ENCODE measurements at regions of chr4 and their contacts with region 1.

Region 1: DNA sequence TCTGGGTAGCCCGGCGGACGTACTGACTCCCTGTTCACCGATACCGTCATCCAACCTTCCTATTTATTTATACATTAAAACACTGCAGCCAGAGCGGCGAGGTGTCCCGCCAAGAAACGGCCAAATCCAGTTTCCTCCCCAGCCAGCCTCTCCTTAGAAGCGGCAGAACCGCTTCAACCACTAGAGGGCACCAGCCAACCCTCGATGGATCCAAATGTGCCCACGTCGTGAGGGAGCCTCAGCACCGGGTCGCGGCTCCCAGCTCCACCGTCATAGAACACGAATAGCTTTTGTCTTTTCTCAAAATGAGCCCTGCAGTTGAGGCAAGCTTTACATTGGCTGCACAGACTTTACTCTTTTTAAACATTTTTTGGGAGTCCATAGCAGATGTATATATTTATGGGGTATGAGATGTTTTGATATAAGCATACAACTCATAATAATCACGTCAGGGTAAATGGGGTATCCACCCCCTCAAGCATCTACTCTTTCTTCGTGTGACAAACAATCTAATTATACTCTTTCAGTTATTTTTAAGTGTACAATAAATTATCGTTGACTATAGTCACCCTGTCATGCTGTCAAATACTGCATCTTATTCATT is 13.0 kb upstream of the HELT start:
- DNase-seq: peak; percentile 59 to 96 (median 83)

Region 2: DNA sequence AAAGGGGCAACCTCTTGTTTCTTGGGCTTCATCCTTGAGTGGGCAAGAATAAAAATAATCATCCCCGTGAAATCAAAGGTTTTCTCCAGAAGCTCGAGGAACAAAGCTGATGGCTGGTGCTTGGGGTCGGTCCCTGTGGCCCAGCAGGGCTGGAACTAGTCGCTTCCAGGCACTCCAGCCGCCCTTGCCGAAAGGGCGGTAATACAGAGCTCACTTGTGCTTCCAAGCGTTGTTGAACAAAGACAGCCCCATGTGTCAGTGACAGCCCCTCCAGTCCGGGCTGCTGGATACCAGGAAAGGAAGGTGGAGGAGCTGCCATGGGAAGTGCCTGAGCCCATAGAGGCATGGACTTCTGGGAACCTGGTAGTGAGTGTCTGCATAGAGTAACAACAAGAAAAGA is 18.2 kb after region 1 on chr4:
- intact Hi-C with region 1: no loop called
- DNase-seq: peak in 1 of 10 donors; percentile 59

Region 3: GRCh38 chr4:185096032-185096653 is 90.8 kb after region 1 on chr4:
- intact Hi-C with region 1: loop called (anchors 10 kb)
- DNase-seq: peak in 3 of 10 donors; percentile 14 to 23 (median 15)

Region 4: DNA sequence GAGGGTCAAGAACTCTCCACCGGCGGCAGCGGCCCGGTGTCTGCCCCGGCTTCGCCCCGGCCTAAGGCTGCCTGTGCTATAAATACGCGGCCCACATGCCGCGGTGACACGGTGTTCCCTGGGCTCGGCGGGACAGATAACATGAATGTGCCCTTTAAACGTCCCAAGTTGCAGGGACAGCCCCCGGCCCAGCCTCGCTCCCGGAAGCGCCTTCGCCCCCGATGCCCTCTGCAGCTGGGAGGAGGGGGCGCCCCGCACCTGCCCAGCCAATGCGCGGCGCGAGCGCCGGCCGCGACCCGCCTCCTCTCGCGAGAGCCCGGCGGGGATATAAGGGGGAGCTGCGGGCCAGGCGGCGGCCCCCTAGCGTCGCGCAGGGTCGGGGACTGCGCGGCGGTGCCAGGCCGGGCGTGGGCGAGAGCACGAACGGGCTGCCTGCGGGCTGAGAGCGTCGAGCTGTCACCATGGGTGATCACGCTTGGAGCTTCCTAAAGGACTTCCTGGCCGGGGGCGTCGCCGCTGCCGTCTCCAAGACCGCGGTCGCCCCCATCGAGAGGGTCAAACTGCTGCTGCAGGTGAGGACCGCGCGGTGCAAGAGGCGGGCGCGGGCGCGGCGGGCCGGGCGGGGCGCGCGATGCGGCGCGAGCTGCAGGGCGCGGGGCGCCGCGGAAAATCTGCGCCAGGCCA is 137.7 kb after region 1 on chr4 and contains the start of gene SLC25A4:
- intact Hi-C with region 1: no loop called
- DNase-seq: peak; percentile 83 to 99 (median 92)